K562 (cell line): ENCODE measurements at regions of chr1 and their contacts with region 1.

Region 1: DNA sequence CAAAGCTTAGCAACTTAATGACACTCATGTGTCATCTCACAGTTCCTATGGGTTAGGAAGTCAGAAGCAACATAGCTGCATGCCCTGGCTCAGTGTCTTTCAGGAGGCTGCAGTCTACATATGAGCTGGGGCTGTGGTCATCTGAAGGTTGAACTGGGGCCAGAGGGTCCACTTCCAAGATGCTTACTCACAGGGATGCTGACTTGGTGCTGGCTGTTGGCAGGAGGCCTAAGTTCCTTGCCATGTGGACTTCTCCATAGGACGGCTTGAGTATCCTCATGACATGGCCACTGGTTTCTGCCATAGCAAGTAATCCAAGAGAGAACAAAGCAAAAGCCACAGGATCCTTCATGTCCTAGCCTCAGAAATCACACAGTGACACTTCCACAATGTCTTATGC is 12.1 kb upstream of the FAM43B start:
- DNase-seq: no peak
- ATAC-seq: no peak
- H3K4me3 ChIP-seq: no peak overlapping the region
- H3K27ac ChIP-seq: no peak overlapping the region
- H3K4me1 ChIP-seq: no peaks in the 10 kb centered on the region
- H3K27me3 ChIP-seq: peaks cover 43 to 69% of the 10 kb centered on the region in 2 experiments
- CTCF ChIP-seq: no peak
- EP300 ChIP-seq: no peak
- POLR2A ChIP-seq: no peak
- RAD21 ChIP-seq: no peak

Region 2: GRCh38 chr1:20528221-20528620 is 12.1 kb before region 1 on chr1:
- CTCF ChIA-PET with region 1: no interaction called
- POLR2A ChIA-PET with region 1: interaction called, 10 read pairs
- in situ Hi-C with region 1: no loop called
- intact Hi-C with region 1: no loop called
- DNase-seq: no peak
- ATAC-seq: no peak
- H3K4me3 ChIP-seq: no peak overlapping the region
- H3K27ac ChIP-seq: no peak overlapping the region
- H3K4me1 ChIP-seq: no peaks in the 10 kb centered on the region; a peak in 1 of 5 replicates
- H3K27me3 ChIP-seq: peaks cover 26 to 74% of the 10 kb centered on the region in 2 experiments
- CTCF ChIP-seq: no peak
- EP300 ChIP-seq: no peak
- POLR2A ChIP-seq: no peak
- RAD21 ChIP-seq: no peak

Region 3: GRCh38 chr1:20551945-20552727 is 11.9 kb after region 1 on chr1 and contains the start of gene FAM43B:
- CTCF ChIA-PET with region 1: no interaction called
- POLR2A ChIA-PET with region 1: interaction called, 10 read pairs
- in situ Hi-C with region 1: no loop called
- intact Hi-C with region 1: no loop called
- DNase-seq: peak; percentile 44 to 75 (median 65)
- ATAC-seq: peak; percentile 81
- H3K4me3 ChIP-seq: no peak within 1 kb of the TSS
- H3K27ac ChIP-seq: no peak within 1 kb of the TSS
- H3K4me1 ChIP-seq: peaks cover 6 to 22% of the 10 kb centered on the region in 2 experiments; a peak in 3 of 5 replicates
- H3K27me3 ChIP-seq: peaks cover 52 to 74% of the 10 kb centered on the region in 2 experiments
- CTCF ChIP-seq: no peak
- EP300 ChIP-seq: no peak
- POLR2A ChIP-seq: no peak
- RAD21 ChIP-seq: no peak
- polyA plus RNA-seq, gene FAM43B: not detected